ENCODE measurements at regions of chr1 and their contacts with region 1.

Region 1: GRCh38 chr1:111507411-111508201 is 4.2 kb upstream of the ADORA3 start:
- DNase-seq: peak in 1 of 2 experiments; percentile 15
- ATAC-seq: peak; percentile 86 to 89
- H3K4me3 ChIP-seq: peak overlapping the region; percentile 20; the same call in 1 of the 3 replicates
- H3K27ac ChIP-seq: peak overlapping the region; percentile 81 to 90
- H3K4me1 ChIP-seq: peaks cover 8% of the 10 kb centered on the region
- CTCF ChIP-seq: no peak
- EP300 ChIP-seq: no peak
- POLR2A ChIP-seq: no peak
- RAD21 ChIP-seq: no peak

Region 2: GRCh38 chr1:111481387-111482221 is 26.0 kb before region 1 on chr1:
- CTCF ChIA-PET with region 1: interaction called, 26 read pairs
- POLR2A ChIA-PET with region 1: no interaction called
- DNase-seq: peak; percentile 31 to 43
- ATAC-seq: peak; percentile 93 to 97
- H3K4me3 ChIP-seq: no peak overlapping the region
- H3K27ac ChIP-seq: no peak overlapping the region
- H3K4me1 ChIP-seq: no peaks in the 10 kb centered on the region
- CTCF ChIP-seq: peak; percentile 51
- EP300 ChIP-seq: no peak
- POLR2A ChIP-seq: no peak
- RAD21 ChIP-seq: peak; percentile 73 to 83

Region 3: GRCh38 chr1:111497592-111497991 is 10.0 kb before region 1 on chr1:
- CTCF ChIA-PET with region 1: interaction called, 54 read pairs
- POLR2A ChIA-PET with region 1: no interaction called
- DNase-seq: no peak
- ATAC-seq: no peak
- H3K4me3 ChIP-seq: no peak overlapping the region
- H3K27ac ChIP-seq: no peak overlapping the region
- H3K4me1 ChIP-seq: no peaks in the 10 kb centered on the region
- CTCF ChIP-seq: no peak
- EP300 ChIP-seq: no peak
- POLR2A ChIP-seq: no peak
- RAD21 ChIP-seq: no peak

Region 4: GRCh38 chr1:111619635-111620440 is 112.2 kb after region 1 on chr1 and contains the start of gene RAP1A:
- CTCF ChIA-PET with region 1: interaction called, 19 read pairs
- POLR2A ChIA-PET with region 1: no interaction called
- DNase-seq: peak; percentile 80 to 87
- ATAC-seq: peak; percentile 93 to 95
- H3K4me3 ChIP-seq: peak within 1 kb of the TSS; percentile 82
- H3K27ac ChIP-seq: peak within 1 kb of the TSS; percentile 91 to 99
- H3K4me1 ChIP-seq: peaks cover 7% of the 10 kb centered on the region; the same call in 2 of the 3 replicates
- CTCF ChIP-seq: no peak
- EP300 ChIP-seq: no peak
- POLR2A ChIP-seq: peak; percentile 54
- RAD21 ChIP-seq: no peak
- polyA plus RNA-seq, gene RAP1A: 32.8 and 39.8 TPM in 2 replicates

Region 5: GRCh38 chr1:111654839-111655238 is 147.2 kb after region 1 on chr1:
- CTCF ChIA-PET with region 1: interaction called, 24 read pairs
- POLR2A ChIA-PET with region 1: no interaction called
- DNase-seq: no peak
- ATAC-seq: no peak
- H3K4me3 ChIP-seq: no peak overlapping the region
- H3K27ac ChIP-seq: no peak overlapping the region
- H3K4me1 ChIP-seq: peaks cover 8% of the 10 kb centered on the region; the same call in 2 of the 3 replicates
- CTCF ChIP-seq: no peak
- EP300 ChIP-seq: no peak
- POLR2A ChIP-seq: no peak
- RAD21 ChIP-seq: no peak

Region 6: DNA sequence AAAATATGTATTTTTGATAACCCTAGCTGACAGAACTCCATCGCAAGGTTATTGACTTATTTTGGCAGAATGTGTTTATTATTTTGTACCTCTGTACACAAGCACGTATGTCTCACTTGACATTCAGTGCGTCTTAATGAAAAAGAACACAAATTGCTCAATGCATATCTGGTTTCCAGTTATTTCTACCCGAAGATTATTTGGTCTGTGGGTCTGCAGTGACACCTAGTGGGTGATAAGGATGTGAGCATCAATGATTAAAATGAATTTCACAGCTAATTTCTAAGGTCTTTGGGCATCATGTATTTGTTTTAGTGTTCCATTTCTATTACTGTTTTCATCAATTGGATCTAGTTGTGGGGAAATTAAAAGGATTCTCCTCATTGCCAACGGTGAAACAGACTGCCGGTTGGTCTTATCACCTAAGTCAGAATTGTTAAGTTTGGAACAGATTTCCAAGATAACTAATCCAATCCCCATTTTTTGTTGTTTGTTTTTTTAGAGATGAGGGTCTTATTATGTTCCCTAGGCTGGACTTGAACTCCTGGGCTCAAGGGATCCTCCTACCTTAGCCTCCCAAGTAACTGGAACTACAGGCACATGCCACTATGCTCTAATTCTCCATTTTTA is 262.0 kb after region 1 on chr1:
- CTCF ChIA-PET with region 1: interaction called, 10 read pairs
- POLR2A ChIA-PET with region 1: no interaction called
- DNase-seq: peak; percentile 18 to 63
- ATAC-seq: peak; percentile 51 to 54; a peak in 3 of 6 replicates
- H3K4me3 ChIP-seq: no peak overlapping the region
- H3K27ac ChIP-seq: no peak overlapping the region
- H3K4me1 ChIP-seq: no peaks in the 10 kb centered on the region
- CTCF ChIP-seq: peak; percentile 83
- EP300 ChIP-seq: no peak
- POLR2A ChIP-seq: no peak
- RAD21 ChIP-seq: peak; percentile 64 to 76

Measured in A549 (cell line).